B cell (primary cell): ENCODE measurements at regions of chr1 and their contacts with region 1.

Region 1: GRCh38 chr1:70093250-70093975 is 112.0 kb downstream of the LRRC40 start:
- DNase-seq: no peak
- ATAC-seq: no peak
- H3K4me3 ChIP-seq: no peak overlapping the region
- H3K4me3 Mint-ChIP-seq: no peak overlapping the region
- H3K27ac ChIP-seq: no peak overlapping the region
- H3K27ac Mint-ChIP-seq: no peak overlapping the region
- H3K4me1 ChIP-seq: no peaks in the 10 kb centered on the region
- H3K4me1 Mint-ChIP-seq: no peaks in the 10 kb centered on the region
- H3K27me3 ChIP-seq: no peaks in the 10 kb centered on the region
- H3K27me3 Mint-ChIP-seq: peaks cover 11% of the 10 kb centered on the region
- CTCF ChIP-seq: no peak

Region 2: DNA sequence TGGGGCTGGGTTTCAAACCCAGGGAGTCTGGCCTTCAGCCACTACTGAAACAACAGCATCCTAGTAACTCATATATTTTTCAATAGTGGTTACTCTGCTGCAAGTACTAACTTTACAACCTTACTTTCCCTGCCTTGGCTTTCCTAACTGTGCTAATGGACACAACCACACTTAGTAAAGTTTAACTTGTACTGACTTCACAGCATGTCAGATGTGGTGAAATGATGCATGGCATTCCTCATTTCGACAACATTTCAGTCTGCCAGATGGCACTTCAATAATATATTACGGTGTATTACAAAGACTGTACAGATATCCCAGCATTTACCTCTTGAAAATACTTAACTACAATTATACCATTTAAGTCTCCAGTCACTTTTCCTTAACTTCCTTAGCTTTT is 497.9 kb before region 1 on chr1:
- CTCF ChIA-PET with region 1: no interaction called
- POLR2A ChIA-PET with region 1: interaction called, 12 read pairs
- intact Hi-C with region 1: no loop called
- DNase-seq: no peak
- ATAC-seq: no peak
- H3K4me3 ChIP-seq: no peak overlapping the region
- H3K4me3 Mint-ChIP-seq: no peak overlapping the region
- H3K27ac ChIP-seq: no peak overlapping the region
- H3K27ac Mint-ChIP-seq: no peak overlapping the region
- H3K4me1 ChIP-seq: no peaks in the 10 kb centered on the region
- H3K4me1 Mint-ChIP-seq: no peaks in the 10 kb centered on the region
- H3K27me3 ChIP-seq: no peaks in the 10 kb centered on the region
- H3K27me3 Mint-ChIP-seq: no peaks in the 10 kb centered on the region
- CTCF ChIP-seq: no peak